Panc1 (cell line): ENCODE measurements at regions of chr1 and their contacts with region 1.

Region 1: GRCh38 chr1:65419681-65420589 is 533 bp upstream of the LEPR start:
- DNase-seq: peak; percentile 93
- ATAC-seq: peak; percentile 94
- H3K4me3 ChIP-seq: peak overlapping the region; percentile 82 to 90
- H3K27ac ChIP-seq: peak overlapping the region; percentile 87
- H3K4me1 ChIP-seq: peaks cover 34% of the 10 kb centered on the region
- H3K27me3 ChIP-seq: no peaks in the 10 kb centered on the region
- CTCF ChIP-seq: no peak

Region 2: DNA sequence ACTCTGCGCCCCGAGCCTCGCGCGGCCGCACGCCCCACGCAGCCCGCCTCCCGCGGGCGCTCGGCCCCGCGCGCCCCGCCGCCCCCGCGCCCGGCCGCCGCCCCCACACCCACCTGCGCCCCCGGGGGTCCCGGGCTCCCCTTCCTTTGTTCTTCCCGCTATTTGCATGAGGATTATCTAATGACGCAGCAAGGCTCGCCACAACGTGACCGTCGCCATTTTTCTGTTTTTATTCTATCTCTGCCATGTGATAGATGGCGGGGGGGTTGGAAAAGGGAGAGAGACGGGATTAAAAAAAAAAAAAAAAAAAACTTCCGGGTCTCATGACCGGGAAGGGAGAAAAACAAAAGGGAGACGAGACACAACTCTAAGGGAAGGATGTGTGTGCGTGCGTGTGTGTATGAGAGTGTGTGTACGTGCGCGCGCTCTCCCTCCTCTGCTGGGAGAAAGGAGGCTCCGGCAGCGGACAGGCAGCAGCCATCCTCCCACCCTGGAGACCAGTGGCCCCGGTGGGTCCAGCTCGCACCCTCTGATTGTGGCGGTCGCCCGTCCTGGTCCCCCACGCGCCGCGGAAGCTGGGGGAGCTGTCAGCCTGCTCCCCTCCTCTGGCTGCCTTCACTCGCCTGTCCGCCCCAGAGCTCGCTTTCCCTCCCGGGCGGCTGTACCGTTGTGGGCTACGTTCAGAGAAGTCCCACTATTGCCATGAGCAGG is 352.3 kb before region 1 on chr1:
- CTCF ChIA-PET with region 1: no interaction called
- POLR2A ChIA-PET with region 1: no interaction called
- in situ Hi-C with region 1: no loop called
- intact Hi-C with region 1: loop called (anchors 10 kb)
- DNase-seq: no peak
- ATAC-seq: peak; percentile 64
- H3K4me3 ChIP-seq: peak overlapping the region; percentile 49 to 68
- H3K27ac ChIP-seq: no peak overlapping the region
- H3K4me1 ChIP-seq: no peaks in the 10 kb centered on the region; the same call in 1 of the 2 replicates
- H3K27me3 ChIP-seq: peaks cover 12% of the 10 kb centered on the region
- CTCF ChIP-seq: no peak

Region 3: GRCh38 chr1:65235867-65236805 is 183.8 kb before region 1 on chr1:
- CTCF ChIA-PET with region 1: interaction called, 4 read pairs
- POLR2A ChIA-PET with region 1: no interaction called
- in situ Hi-C with region 1: no loop called
- intact Hi-C with region 1: loop called (anchors 10 kb)
- DNase-seq: no peak
- ATAC-seq: no peak
- H3K4me3 ChIP-seq: no peak overlapping the region
- H3K27ac ChIP-seq: no peak overlapping the region
- H3K4me1 ChIP-seq: no peaks in the 10 kb centered on the region
- H3K27me3 ChIP-seq: no peaks in the 10 kb centered on the region
- CTCF ChIP-seq: peak; percentile 60; the same call in 1 of the 2 replicates

Region 4: GRCh38 chr1:65539266-65540131 is 119.6 kb after region 1 on chr1:
- CTCF ChIA-PET with region 1: no interaction called
- POLR2A ChIA-PET with region 1: no interaction called
- in situ Hi-C with region 1: no loop called
- intact Hi-C with region 1: no loop called
- DNase-seq: no peak
- ATAC-seq: no peak
- H3K4me3 ChIP-seq: no peak overlapping the region
- H3K27ac ChIP-seq: no peak overlapping the region
- H3K4me1 ChIP-seq: no peaks in the 10 kb centered on the region
- H3K27me3 ChIP-seq: no peaks in the 10 kb centered on the region
- CTCF ChIP-seq: no peak

Region 5: GRCh38 chr1:65658122-65658521 is 238.2 kb after region 1 on chr1:
- CTCF ChIA-PET with region 1: no interaction called
- POLR2A ChIA-PET with region 1: no interaction called
- in situ Hi-C with region 1: no loop called
- intact Hi-C with region 1: no loop called
- DNase-seq: no peak
- ATAC-seq: no peak
- H3K4me3 ChIP-seq: no peak overlapping the region
- H3K27ac ChIP-seq: no peak overlapping the region
- H3K4me1 ChIP-seq: no peaks in the 10 kb centered on the region
- H3K27me3 ChIP-seq: no peaks in the 10 kb centered on the region
- CTCF ChIP-seq: no peak